HepG2 (cell line): ENCODE measurements at regions of chr1 and their contacts with region 1.

Region 1: DNA sequence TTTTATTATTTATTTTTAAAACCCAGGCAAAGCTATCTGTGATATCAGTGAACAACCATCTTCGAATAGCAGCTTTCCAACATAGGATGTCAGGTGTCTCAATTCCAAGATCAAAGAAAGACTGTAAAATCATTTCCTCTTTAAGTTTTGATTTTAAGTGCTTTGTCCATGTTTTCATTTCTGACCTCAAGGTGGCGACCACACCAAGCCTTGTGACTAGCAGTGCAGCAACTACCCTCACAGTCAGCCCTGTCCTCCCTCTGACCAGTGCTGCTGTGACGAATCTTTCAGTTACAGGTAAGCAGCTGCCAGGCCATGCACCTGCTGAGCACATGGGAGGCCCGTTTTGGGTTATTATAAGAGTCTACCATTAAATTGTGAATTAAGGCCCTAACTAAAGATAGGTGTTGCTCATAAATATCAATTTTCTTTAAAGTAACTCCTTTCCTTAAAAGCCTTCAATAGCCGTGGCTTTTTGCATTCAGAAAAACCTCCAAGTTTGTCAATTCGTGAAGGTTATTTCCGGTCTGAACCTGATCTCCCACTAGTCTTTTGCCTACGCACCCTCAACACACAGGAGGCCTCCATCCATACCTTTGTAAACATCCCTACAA is 117.0 kb downstream of the CD247 start:
- DNase-seq: peak; percentile 39
- ATAC-seq: peak; percentile 87
- H3K4me3 ChIP-seq: no peak overlapping the region
- H3K27ac ChIP-seq: no peak overlapping the region
- H3K4me1 ChIP-seq: no peaks in the 10 kb centered on the region
- H3K27me3 ChIP-seq: no peaks in the 10 kb centered on the region; a peak in 1 of 5 replicates
- CTCF ChIP-seq: peak; percentile 73
- EP300 ChIP-seq: no peak
- POLR2A ChIP-seq: no peak
- RAD21 ChIP-seq: peak; percentile 67

Region 2: GRCh38 chr1:167266965-167267364 is 134.4 kb before region 1 on chr1:
- CTCF ChIA-PET with region 1: interaction called, 10 read pairs
- POLR2A ChIA-PET with region 1: no interaction called
- in situ Hi-C with region 1: loop called (anchors 5 kb)
- intact Hi-C with region 1: loop called (anchors 2 kb)
- DNase-seq: no peak
- ATAC-seq: no peak
- H3K4me3 ChIP-seq: no peak overlapping the region
- H3K27ac ChIP-seq: no peak overlapping the region
- H3K4me1 ChIP-seq: peaks cover 18% of the 10 kb centered on the region
- H3K27me3 ChIP-seq: no peaks in the 10 kb centered on the region
- CTCF ChIP-seq: no peak
- EP300 ChIP-seq: no peak
- POLR2A ChIP-seq: no peak
- RAD21 ChIP-seq: no peak

Region 3: GRCh38 chr1:167273027-167273800 is 128.2 kb before region 1 on chr1:
- CTCF ChIA-PET with region 1: interaction called, 10 read pairs
- POLR2A ChIA-PET with region 1: no interaction called
- in situ Hi-C with region 1: loop called (anchors 5 kb)
- intact Hi-C with region 1: no loop called
- DNase-seq: no peak
- ATAC-seq: no peak
- H3K4me3 ChIP-seq: no peak overlapping the region
- H3K27ac ChIP-seq: no peak overlapping the region
- H3K4me1 ChIP-seq: peaks cover 5% of the 10 kb centered on the region
- H3K27me3 ChIP-seq: no peaks in the 10 kb centered on the region
- CTCF ChIP-seq: no peak
- EP300 ChIP-seq: no peak
- POLR2A ChIP-seq: no peak
- RAD21 ChIP-seq: no peak

Region 4: GRCh38 chr1:167373398-167373797 is 28.0 kb before region 1 on chr1:
- CTCF ChIA-PET with region 1: no interaction called
- POLR2A ChIA-PET with region 1: no interaction called
- in situ Hi-C with region 1: no loop called
- intact Hi-C with region 1: no loop called
- DNase-seq: no peak
- ATAC-seq: no peak
- H3K4me3 ChIP-seq: no peak overlapping the region
- H3K27ac ChIP-seq: no peak overlapping the region
- H3K4me1 ChIP-seq: no peaks in the 10 kb centered on the region
- H3K27me3 ChIP-seq: no peaks in the 10 kb centered on the region; a peak in 1 of 5 replicates
- CTCF ChIP-seq: no peak
- EP300 ChIP-seq: no peak
- POLR2A ChIP-seq: no peak
- RAD21 ChIP-seq: no peak

Region 5: DNA sequence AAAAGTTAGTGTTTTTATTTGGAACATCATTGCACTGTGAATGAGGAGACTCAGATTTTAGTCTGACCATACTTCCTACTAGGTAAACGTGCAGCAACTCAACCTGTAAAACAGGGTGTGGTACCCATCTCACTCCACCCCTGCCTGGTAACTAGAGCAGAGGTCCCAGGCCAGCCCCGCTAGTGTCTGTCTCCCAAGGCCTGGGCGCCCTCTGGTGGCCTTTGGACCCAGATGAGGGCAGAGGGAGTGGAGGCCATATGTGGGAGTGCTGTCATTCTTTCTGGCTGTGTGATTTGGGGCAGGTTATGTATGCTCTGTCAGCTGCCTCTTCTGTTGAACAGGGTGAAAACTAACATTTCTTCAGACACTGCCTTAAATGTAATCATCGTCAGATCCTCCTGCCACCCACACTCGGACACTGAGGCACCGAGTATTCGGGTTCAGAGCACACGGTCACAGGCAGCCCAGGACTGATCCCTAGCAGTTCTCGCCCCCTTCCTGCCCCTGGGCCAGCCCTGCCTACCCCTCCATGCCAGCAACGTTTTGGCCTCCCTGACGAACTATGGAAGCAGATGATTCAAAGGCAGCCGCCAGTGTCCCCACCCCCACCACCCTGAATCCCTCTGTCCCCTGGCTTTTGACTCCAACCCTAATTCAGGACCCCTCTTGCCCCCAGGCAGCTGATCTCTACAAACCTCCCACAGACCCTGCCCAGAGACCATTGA is 40.9 kb after region 1 on chr1:
- CTCF ChIA-PET with region 1: interaction called, 11 read pairs
- POLR2A ChIA-PET with region 1: no interaction called
- in situ Hi-C with region 1: no loop called
- intact Hi-C with region 1: loop called (anchors 1 kb)
- DNase-seq: peak; percentile 70
- ATAC-seq: peak; percentile 95
- H3K4me3 ChIP-seq: peak overlapping the region in 1 of 3 experiments; percentile 36; a peak in 1 of 6 replicates
- H3K27ac ChIP-seq: no peak overlapping the region
- H3K4me1 ChIP-seq: peaks cover 20% of the 10 kb centered on the region
- H3K27me3 ChIP-seq: peaks cover 0 to 32% of the 10 kb centered on the region in 2 experiments; a peak in 2 of 5 replicates
- CTCF ChIP-seq: peak; percentile 97
- EP300 ChIP-seq: no peak
- POLR2A ChIP-seq: no peak
- RAD21 ChIP-seq: peak; percentile 87

Region 6: GRCh38 chr1:167533851-167534300 is 132.5 kb after region 1 on chr1:
- CTCF ChIA-PET with region 1: interaction called, 15 read pairs
- POLR2A ChIA-PET with region 1: no interaction called
- in situ Hi-C with region 1: no loop called
- intact Hi-C with region 1: loop called (anchors 2 kb)
- DNase-seq: peak; percentile 54
- ATAC-seq: peak; percentile 83
- H3K4me3 ChIP-seq: no peak overlapping the region
- H3K27ac ChIP-seq: no peak overlapping the region
- H3K4me1 ChIP-seq: peaks cover 28% of the 10 kb centered on the region
- H3K27me3 ChIP-seq: no peaks in the 10 kb centered on the region
- CTCF ChIP-seq: peak; percentile 85
- EP300 ChIP-seq: no peak
- POLR2A ChIP-seq: no peak
- RAD21 ChIP-seq: peak; percentile 72

Region 7: GRCh38 chr1:167553136-167554027 is 152.0 kb after region 1 on chr1 and contains the start of gene CREG1:
- CTCF ChIA-PET with region 1: interaction called, 7 read pairs
- POLR2A ChIA-PET with region 1: no interaction called
- in situ Hi-C with region 1: no loop called
- intact Hi-C with region 1: loop called (anchors 2 kb)
- DNase-seq: peak; percentile 88
- ATAC-seq: peak; percentile 100
- H3K4me3 ChIP-seq: peak within 1 kb of the TSS; percentile 57 to 72 (median 58)
- H3K27ac ChIP-seq: no peak within 1 kb of the TSS
- H3K4me1 ChIP-seq: peaks cover 7% of the 10 kb centered on the region
- H3K27me3 ChIP-seq: peaks cover 0 to 4% of the 10 kb centered on the region in 2 experiments; a peak in 1 of 5 replicates
- CTCF ChIP-seq: no peak
- EP300 ChIP-seq: no peak
- POLR2A ChIP-seq: peak; percentile 77 to 82
- RAD21 ChIP-seq: peak; percentile 57; the same call in 1 of the 2 replicates
- total RNA-seq, gene CREG1: 19.1 and 31.3 TPM in 2 replicates